ENCODE measurements at regions of chr1 and their contacts with region 1.

Region 1: DNA sequence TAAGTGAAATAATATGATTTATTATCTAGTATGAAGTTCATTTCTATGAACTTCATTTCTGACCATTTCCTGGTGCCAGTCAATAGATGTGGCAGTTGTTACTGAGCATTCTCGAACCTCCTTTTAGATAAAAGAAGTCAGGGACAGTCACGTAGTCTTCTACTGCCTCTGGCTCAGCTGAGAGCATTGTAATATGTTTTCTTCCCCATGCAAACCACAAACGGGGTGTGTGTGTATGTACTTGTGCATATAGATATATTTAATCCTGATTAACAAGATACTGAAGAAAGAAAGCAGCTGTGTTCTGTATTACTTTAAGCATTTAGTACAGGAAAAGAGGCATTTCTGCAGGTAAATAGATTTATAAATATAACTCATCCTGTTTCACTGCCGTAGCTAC is 21.6 kb downstream of the ZNF684 start:
- DNase-seq: no peak
- ATAC-seq: no peak
- H3K4me3 ChIP-seq: no peak overlapping the region
- H3K27ac ChIP-seq: no peak overlapping the region
- H3K4me1 ChIP-seq: no peaks in the 10 kb centered on the region
- H3K27me3 ChIP-seq: no peaks in the 10 kb centered on the region
- CTCF ChIP-seq: no peak

Region 2: DNA sequence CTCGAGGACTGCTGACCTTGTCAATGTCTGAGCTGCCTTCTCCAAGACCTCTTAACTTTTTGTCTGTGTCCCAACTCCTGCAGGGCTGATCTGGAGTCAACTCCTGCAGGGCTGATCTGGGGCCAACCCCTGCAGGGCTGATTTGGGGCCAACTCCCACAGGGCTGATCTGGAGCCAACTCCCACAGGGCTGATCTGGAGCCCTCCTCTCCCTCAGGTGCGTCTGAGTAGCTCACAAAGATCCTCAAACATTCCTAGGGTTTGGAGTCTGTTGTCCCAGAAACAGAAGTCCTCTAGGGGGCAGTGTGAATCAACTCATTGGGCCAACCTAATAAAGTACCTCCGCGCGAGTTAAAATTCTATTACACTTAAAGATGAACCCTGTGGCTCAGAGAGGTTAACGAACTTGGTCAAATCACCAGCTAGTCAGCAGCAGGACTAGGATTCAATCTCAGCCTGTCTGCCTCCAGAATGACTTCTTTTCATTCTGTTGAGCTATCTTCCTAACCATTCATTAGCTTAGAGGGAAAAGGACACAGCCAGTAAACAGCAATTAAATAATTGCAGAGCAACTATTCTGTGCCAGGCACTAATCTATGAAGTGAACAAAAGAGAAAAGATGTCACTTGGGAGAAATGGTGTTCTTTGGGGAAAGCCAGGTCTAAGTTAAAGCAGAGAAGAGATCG is 409.0 kb before region 1 on chr1:
- CTCF ChIA-PET with region 1: no interaction called
- POLR2A ChIA-PET with region 1: interaction called, 12 read pairs
- in situ Hi-C with region 1: no loop called
- intact Hi-C with region 1: no loop called
- DNase-seq: peak; percentile 43
- ATAC-seq: peak; percentile 95
- H3K4me3 ChIP-seq: no peak overlapping the region
- H3K27ac ChIP-seq: no peak overlapping the region
- H3K4me1 ChIP-seq: peaks cover 14% of the 10 kb centered on the region
- H3K27me3 ChIP-seq: peaks cover 26% of the 10 kb centered on the region
- CTCF ChIP-seq: peak; percentile 84

Region 3: DNA sequence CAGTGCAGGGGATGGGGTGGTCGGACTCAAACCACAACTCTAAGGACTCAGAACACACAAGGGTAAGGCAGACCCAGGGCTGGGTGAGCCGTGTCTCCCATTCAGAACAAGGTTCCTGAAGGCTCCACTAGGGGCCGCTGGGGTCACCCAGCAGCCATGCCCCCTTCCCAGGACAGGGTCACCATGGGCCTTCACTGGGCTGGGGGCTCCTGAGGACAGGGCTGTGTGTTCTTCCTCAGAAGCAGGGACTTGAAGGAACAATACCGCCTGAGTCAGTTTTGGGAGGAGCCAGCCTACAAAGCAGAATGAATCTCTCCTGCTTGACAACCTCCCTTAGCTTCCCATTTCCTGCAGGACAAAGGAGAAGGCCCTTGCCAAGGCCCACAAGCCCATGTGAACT is 97.1 kb after region 1 on chr1:
- CTCF ChIA-PET with region 1: no interaction called
- POLR2A ChIA-PET with region 1: no interaction called
- in situ Hi-C with region 1: no loop called
- intact Hi-C with region 1: no loop called
- DNase-seq: no peak
- ATAC-seq: peak; percentile 59; the same call in 1 of the 2 replicates
- H3K4me3 ChIP-seq: no peak overlapping the region
- H3K27ac ChIP-seq: no peak overlapping the region
- H3K4me1 ChIP-seq: no peaks in the 10 kb centered on the region
- H3K27me3 ChIP-seq: no peaks in the 10 kb centered on the region
- CTCF ChIP-seq: peak; percentile 77